Activated naive CD4-positive, alpha-beta T cell treated with anti-CD3 and anti-CD28 coated beads for 36 hours (primary cell): ENCODE measurements at regions of chr20 and their contacts with region 1.

Region 1: DNA sequence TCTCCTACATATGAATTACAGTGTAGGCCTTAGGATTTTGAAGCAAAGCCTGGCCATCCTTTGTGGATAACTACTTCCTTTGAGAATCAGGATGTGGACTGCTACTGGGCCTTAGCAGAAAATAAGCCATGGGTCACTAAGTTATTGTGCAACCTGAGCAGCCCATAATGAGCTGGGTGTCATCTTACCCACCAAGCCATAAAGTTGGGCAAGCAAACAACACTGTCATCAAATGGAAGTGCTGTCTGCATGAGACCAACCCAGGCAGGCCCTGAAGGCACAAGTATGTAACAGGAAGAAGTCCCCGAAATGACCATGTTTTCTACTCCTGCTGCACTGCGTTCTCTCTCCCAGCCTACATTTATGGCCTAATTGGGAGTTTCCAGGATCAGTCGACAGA is 205.6 kb upstream of the GGTLC1 start:
- DNase-seq: no peak
- H3K4me3 Mint-ChIP-seq: no peak overlapping the region
- H3K27ac Mint-ChIP-seq: no peak overlapping the region
- H3K4me1 Mint-ChIP-seq: no peaks in the 10 kb centered on the region
- H3K27me3 Mint-ChIP-seq: no peaks in the 10 kb centered on the region

Region 2: DNA sequence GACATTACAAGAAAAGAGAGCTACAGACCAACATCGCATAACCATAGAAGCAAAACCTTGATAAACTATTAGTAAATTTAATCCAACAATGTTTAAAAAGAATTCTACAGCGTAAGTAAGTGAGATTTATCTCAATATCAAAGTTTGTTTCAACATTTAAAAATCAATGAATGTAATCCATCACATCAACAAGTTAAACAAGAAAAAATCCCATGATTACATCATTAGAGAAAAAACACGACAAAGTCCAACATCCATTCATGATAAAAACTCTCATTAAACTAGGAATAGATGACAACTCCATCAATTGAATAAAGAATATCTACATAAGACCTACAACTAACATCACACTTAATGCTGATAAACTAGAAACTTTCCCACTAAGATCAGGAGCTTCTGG is 33.5 kb after region 1 on chr20:
- CTCF ChIA-PET with region 1: no interaction called
- intact Hi-C with region 1: loop called (anchors 5 kb)
- DNase-seq: no peak
- H3K4me3 Mint-ChIP-seq: no peak overlapping the region
- H3K27ac Mint-ChIP-seq: no peak overlapping the region
- H3K4me1 Mint-ChIP-seq: no peaks in the 10 kb centered on the region
- H3K27me3 Mint-ChIP-seq: peaks cover 5% of the 10 kb centered on the region